ENCODE measurements at regions of chr9 and their contacts with region 1.

Region 1: DNA sequence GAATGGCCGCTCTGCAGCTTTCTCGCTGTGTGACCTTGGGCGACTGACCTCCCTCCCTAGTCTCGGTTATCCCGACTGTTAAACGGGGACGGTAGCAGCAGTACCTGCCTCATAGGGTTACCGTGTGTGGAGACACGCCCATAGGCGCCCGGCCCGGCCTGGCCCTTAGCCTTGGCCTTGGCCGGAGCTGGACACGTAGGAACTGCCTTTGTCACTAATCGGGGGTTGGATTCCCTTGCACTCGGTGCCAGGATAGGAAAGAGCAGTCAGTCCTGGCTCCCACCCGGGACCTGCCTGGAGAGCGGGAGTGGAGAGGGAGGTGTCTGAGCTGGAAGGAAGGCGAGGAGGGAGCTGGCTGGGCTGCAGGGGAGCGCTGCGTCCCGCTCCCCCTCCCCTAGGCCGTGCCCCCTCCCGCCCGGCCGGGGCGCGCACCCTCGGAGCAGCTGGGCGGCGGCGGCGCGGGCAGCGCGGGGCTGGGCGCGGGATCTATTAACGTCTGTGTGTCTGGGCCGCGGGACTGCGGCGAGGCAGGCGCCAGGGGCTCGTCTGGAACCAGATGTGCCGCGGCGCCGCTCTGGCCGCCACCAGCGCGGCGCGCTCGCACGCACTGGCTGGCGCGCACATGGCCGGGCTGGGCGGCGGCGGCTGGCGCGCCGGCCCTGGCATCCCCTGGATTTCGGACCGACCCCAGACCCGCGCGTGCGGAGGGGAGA is 31.6 kb downstream of the PRRX2 start:
- DNase-seq: peak; percentile 51
- ATAC-seq: peak; percentile 59
- H3K4me3 Mint-ChIP-seq: peak overlapping the region; percentile 62
- H3K27ac Mint-ChIP-seq: peak overlapping the region; percentile 86
- H3K4me1 Mint-ChIP-seq: peaks cover 10% of the 10 kb centered on the region
- H3K27me3 Mint-ChIP-seq: peaks cover 28% of the 10 kb centered on the region

Region 2: GRCh38 chr9:128643519-128644300 is 1053.4 kb before region 1 on chr9:
- CTCF ChIA-PET with region 1: no interaction called
- POLR2A ChIA-PET with region 1: no interaction called
- intact Hi-C with region 1: loop called in 1 of 2 experiments (anchors 5 kb)
- DNase-seq: no peak
- ATAC-seq: no peak
- H3K4me3 Mint-ChIP-seq: no peak overlapping the region
- H3K27ac Mint-ChIP-seq: no peak overlapping the region
- H3K4me1 Mint-ChIP-seq: no peaks in the 10 kb centered on the region
- H3K27me3 Mint-ChIP-seq: no peaks in the 10 kb centered on the region